GM12878 (cell line): ENCODE measurements at regions of chr12 and their contacts with region 1.

Region 1: GRCh38 chr12:26832822-26833742 is at the start of gene ITPR2:
- DNase-seq: peak; percentile 60
- ATAC-seq: peak; percentile 84
- H3K4me3 ChIP-seq: peak within 1 kb of the TSS; percentile 87
- H3K27ac ChIP-seq: peak within 1 kb of the TSS; percentile 80
- H3K4me1 ChIP-seq: peaks cover 5% of the 10 kb centered on the region
- H3K27me3 ChIP-seq: no peaks in the 10 kb centered on the region
- CTCF ChIP-seq: peak; percentile 20 to 51 (median 21); a peak in 3 of 6 replicates
- EP300 ChIP-seq: no peak
- POLR2A ChIP-seq: peak; percentile 87
- RAD21 ChIP-seq: peak; percentile 61
- polyA plus RNA-seq, gene ITPR2: 7.5 to 10.9 TPM

Region 2: GRCh38 chr12:26713885-26714383 is 119.1 kb before region 1 on chr12:
- CTCF ChIA-PET with region 1: interaction called, 5 read pairs
- POLR2A ChIA-PET with region 1: interaction called, 9 read pairs
- RAD21 ChIA-PET with region 1: interaction called, 19 read pairs
- SMC1A ChIA-PET with region 1: interaction called, 12 read pairs
- in situ Hi-C with region 1: no loop called
- intact Hi-C with region 1: no loop called
- DNase-seq: peak; percentile 48
- ATAC-seq: peak; percentile 87
- H3K4me3 ChIP-seq: no peak overlapping the region
- H3K27ac ChIP-seq: peak overlapping the region; percentile 69
- H3K4me1 ChIP-seq: peaks cover 22% of the 10 kb centered on the region
- H3K27me3 ChIP-seq: no peaks in the 10 kb centered on the region
- CTCF ChIP-seq: no peak
- EP300 ChIP-seq: peak in 1 of 2 experiments; percentile 74; a peak in 2 of 4 replicates
- POLR2A ChIP-seq: no peak
- RAD21 ChIP-seq: no peak

Region 3: GRCh38 chr12:26732005-26732908 is 100.8 kb before region 1 on chr12:
- CTCF ChIA-PET with region 1: interaction called, 22 read pairs
- POLR2A ChIA-PET with region 1: interaction called, 10 read pairs
- RAD21 ChIA-PET with region 1: interaction called, 31 read pairs
- SMC1A ChIA-PET with region 1: interaction called, 38 read pairs
- in situ Hi-C with region 1: no loop called
- intact Hi-C with region 1: loop called (anchors 2 kb)
- DNase-seq: peak; percentile 84
- ATAC-seq: peak; percentile 59
- H3K4me3 ChIP-seq: peak overlapping the region; percentile 13; the same call in 1 of the 2 replicates
- H3K27ac ChIP-seq: peak overlapping the region; percentile 97
- H3K4me1 ChIP-seq: peaks cover 65% of the 10 kb centered on the region
- H3K27me3 ChIP-seq: no peaks in the 10 kb centered on the region
- CTCF ChIP-seq: no peak
- EP300 ChIP-seq: peak; percentile 69 to 89
- POLR2A ChIP-seq: no peak
- RAD21 ChIP-seq: peak; percentile 15; the same call in 1 of the 2 replicates

Region 4: GRCh38 chr12:26821212-26821701 is 11.8 kb before region 1 on chr12:
- CTCF ChIA-PET with region 1: interaction called, 6 read pairs
- POLR2A ChIA-PET with region 1: interaction called, 17 read pairs
- RAD21 ChIA-PET with region 1: interaction called, 26 read pairs
- SMC1A ChIA-PET with region 1: interaction called, 41 read pairs
- in situ Hi-C with region 1: no loop called
- intact Hi-C with region 1: no loop called
- DNase-seq: no peak
- ATAC-seq: no peak
- H3K4me3 ChIP-seq: no peak overlapping the region
- H3K27ac ChIP-seq: no peak overlapping the region; the same call in 1 of the 2 replicates
- H3K4me1 ChIP-seq: peaks cover 24% of the 10 kb centered on the region; the same call in 1 of the 2 replicates
- H3K27me3 ChIP-seq: no peaks in the 10 kb centered on the region
- CTCF ChIP-seq: no peak
- EP300 ChIP-seq: no peak
- POLR2A ChIP-seq: no peak
- RAD21 ChIP-seq: no peak

Region 5: GRCh38 chr12:26853303-26854030 is 20.4 kb after region 1 on chr12:
- CTCF ChIA-PET with region 1: interaction called, 4 read pairs
- POLR2A ChIA-PET with region 1: interaction called, 6 read pairs
- RAD21 ChIA-PET with region 1: interaction called, 12 read pairs
- SMC1A ChIA-PET with region 1: interaction called, 4 read pairs
- in situ Hi-C with region 1: no loop called
- intact Hi-C with region 1: no loop called
- DNase-seq: no peak
- ATAC-seq: peak; percentile 97
- H3K4me3 ChIP-seq: no peak overlapping the region
- H3K27ac ChIP-seq: no peak overlapping the region
- H3K4me1 ChIP-seq: peaks cover 3% of the 10 kb centered on the region; the same call in 1 of the 2 replicates
- H3K27me3 ChIP-seq: no peaks in the 10 kb centered on the region
- CTCF ChIP-seq: peak; percentile 81 to 94 (median 88); a peak in 5 of 6 replicates
- EP300 ChIP-seq: no peak; a peak in 1 of 4 replicates
- POLR2A ChIP-seq: no peak
- RAD21 ChIP-seq: peak; percentile 93

Region 6: GRCh38 chr12:26878661-26879119 is 45.6 kb after region 1 on chr12:
- CTCF ChIA-PET with region 1: interaction called, 16 read pairs
- POLR2A ChIA-PET with region 1: interaction called, 8 read pairs
- RAD21 ChIA-PET with region 1: interaction called, 23 read pairs
- SMC1A ChIA-PET with region 1: interaction called, 40 read pairs
- in situ Hi-C with region 1: no loop called
- intact Hi-C with region 1: loop called (anchors 10 kb)
- DNase-seq: no peak
- ATAC-seq: peak; percentile 77
- H3K4me3 ChIP-seq: no peak overlapping the region
- H3K27ac ChIP-seq: no peak overlapping the region
- H3K4me1 ChIP-seq: peaks cover 15% of the 10 kb centered on the region
- H3K27me3 ChIP-seq: no peaks in the 10 kb centered on the region
- CTCF ChIP-seq: no peak
- EP300 ChIP-seq: no peak; a peak in 1 of 4 replicates
- POLR2A ChIP-seq: no peak
- RAD21 ChIP-seq: no peak